Breast epithelium (tissue), 4 donors: ENCODE measurements at regions of chr2 and their contacts with region 1.

Region 1: GRCh38 chr2:182929972-182930371 is 63.5 kb upstream of the FRZB start:
- DNase-seq: no peak
- H3K4me3 ChIP-seq: no peak overlapping the region
- H3K27ac ChIP-seq: no peak overlapping the region
- H3K4me1 ChIP-seq: no peaks in the 10 kb centered on the region
- H3K27me3 ChIP-seq: no peaks in the 10 kb centered on the region
- CTCF ChIP-seq: no peak
- POLR2A ChIP-seq: no peak

Region 2: DNA sequence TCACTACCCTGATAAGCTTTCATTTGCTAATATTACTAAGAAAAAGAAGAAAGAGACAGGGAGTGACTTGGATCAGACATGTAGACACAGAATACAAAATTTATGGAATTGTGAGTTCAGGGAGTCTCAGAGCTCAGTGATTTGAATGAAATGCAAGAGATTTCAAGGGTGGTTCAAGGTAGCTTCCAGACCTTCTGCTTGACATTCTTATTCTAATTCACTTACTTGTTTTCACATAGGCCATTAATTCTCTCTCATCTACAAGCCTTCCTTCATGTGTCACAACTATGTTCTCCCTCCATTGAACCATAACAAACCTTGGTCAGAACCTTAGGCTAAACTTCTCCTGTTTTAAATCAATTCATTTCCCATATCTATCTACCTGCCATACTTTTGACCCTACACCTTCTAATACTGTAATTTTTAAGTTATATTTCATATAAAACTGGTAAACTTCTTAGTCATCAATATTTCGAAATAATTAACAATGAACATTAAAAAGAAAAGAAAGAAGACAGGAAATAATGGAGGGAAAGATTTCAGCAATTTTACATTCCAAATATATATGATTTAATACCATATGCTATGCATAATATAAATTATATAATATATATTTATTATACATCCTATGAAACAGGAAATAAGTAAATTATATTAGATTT is 363.9 kb before region 1 on chr2:
- intact Hi-C with region 1: no loop called
- DNase-seq: no peak
- H3K4me3 ChIP-seq: no peak overlapping the region
- H3K27ac ChIP-seq: no peak overlapping the region
- H3K4me1 ChIP-seq: no peaks in the 10 kb centered on the region
- H3K27me3 ChIP-seq: no peaks in the 10 kb centered on the region
- CTCF ChIP-seq: no peak
- POLR2A ChIP-seq: no peak

Region 3: GRCh38 chr2:182883451-182883850 is 46.5 kb before region 1 on chr2:
- intact Hi-C with region 1: loop called (anchors 2 kb)
- DNase-seq: no peak
- H3K4me3 ChIP-seq: no peak overlapping the region
- H3K27ac ChIP-seq: no peak overlapping the region
- H3K4me1 ChIP-seq: no peaks in the 10 kb centered on the region
- H3K27me3 ChIP-seq: no peaks in the 10 kb centered on the region
- CTCF ChIP-seq: no peak
- POLR2A ChIP-seq: no peak

Region 4: GRCh38 chr2:182954789-182955188 is 24.8 kb after region 1 on chr2:
- intact Hi-C with region 1: no loop called
- DNase-seq: no peak
- H3K4me3 ChIP-seq: no peak overlapping the region
- H3K27ac ChIP-seq: no peak overlapping the region
- H3K4me1 ChIP-seq: no peaks in the 10 kb centered on the region
- H3K27me3 ChIP-seq: no peaks in the 10 kb centered on the region
- CTCF ChIP-seq: no peak
- POLR2A ChIP-seq: no peak